ENCODE measurements at regions of chr6 and their contacts with region 1.

Region 1: DNA sequence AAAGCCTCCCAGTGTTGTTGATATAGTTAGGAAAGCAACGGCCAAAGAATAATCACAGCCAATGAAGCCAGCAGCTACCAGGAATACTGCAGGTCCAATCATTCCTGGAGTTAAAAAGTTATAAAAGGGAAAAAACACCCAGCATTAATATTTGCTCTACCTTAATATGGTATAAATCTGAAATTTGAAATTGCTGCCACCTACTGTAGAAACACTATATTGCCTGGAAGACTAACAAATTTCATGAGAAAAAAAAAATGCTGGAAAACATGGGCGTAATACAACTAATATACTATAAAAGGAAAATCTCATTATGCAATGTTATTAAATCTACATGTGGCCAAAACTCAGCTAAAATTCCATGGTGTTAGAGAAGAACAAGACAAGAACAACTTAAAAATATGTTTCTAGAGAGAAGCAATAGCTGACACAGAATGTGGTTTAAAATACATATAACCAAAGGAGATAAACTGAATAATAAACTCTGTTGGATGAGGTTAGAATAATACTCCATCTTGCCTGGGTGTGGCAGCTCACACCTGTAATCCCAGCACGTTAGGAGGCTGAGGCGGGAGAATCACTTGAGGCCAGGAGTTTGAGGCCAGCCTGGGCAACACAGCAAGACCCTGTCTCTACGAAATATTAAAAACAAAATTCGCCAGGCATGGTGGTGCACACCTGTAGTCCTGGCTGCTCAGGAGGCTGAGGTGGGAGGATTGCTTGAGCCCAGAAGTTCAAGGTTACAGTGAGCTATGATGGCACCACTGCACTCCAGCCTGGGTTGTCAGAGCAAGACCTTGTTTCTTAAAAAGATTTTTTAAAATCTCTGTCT is 43.1 kb downstream of the SLC17A5 start:
- DNase-seq: no peak
- H3K4me3 Mint-ChIP-seq: no peak overlapping the region
- H3K27ac Mint-ChIP-seq: no peak overlapping the region
- H3K4me1 Mint-ChIP-seq: peaks cover 2% of the 10 kb centered on the region
- H3K27me3 Mint-ChIP-seq: no peaks in the 10 kb centered on the region

Region 2: GRCh38 chr6:71982389-71982788 is 1628.3 kb before region 1 on chr6:
- CTCF ChIA-PET with region 1: no interaction called
- POLR2A ChIA-PET with region 1: no interaction called
- DNase-seq: no peak
- H3K4me3 Mint-ChIP-seq: no peak overlapping the region
- H3K27ac Mint-ChIP-seq: no peak overlapping the region
- H3K4me1 Mint-ChIP-seq: no peaks in the 10 kb centered on the region
- H3K27me3 Mint-ChIP-seq: no peaks in the 10 kb centered on the region

Region 3: GRCh38 chr6:73585566-73586415 is 24.9 kb before region 1 on chr6:
- CTCF ChIA-PET with region 1: interaction called, 12 read pairs
- POLR2A ChIA-PET with region 1: interaction called, 4 read pairs
- DNase-seq: peak; percentile 34
- H3K4me3 Mint-ChIP-seq: peak overlapping the region; percentile 70
- H3K27ac Mint-ChIP-seq: peak overlapping the region; percentile 93
- H3K4me1 Mint-ChIP-seq: peaks cover 27% of the 10 kb centered on the region
- H3K27me3 Mint-ChIP-seq: no peaks in the 10 kb centered on the region

Region 4: GRCh38 chr6:73679009-73679408 is 68.3 kb after region 1 on chr6:
- CTCF ChIA-PET with region 1: no interaction called
- POLR2A ChIA-PET with region 1: no interaction called
- DNase-seq: no peak
- H3K4me3 Mint-ChIP-seq: no peak overlapping the region
- H3K27ac Mint-ChIP-seq: no peak overlapping the region
- H3K4me1 Mint-ChIP-seq: peaks cover 2% of the 10 kb centered on the region
- H3K27me3 Mint-ChIP-seq: peaks cover 18% of the 10 kb centered on the region

Measured in activated CD4-positive, alpha-beta memory T cell treated with anti-CD3 and anti-CD28 coated beads, Interleukin-2, amount 10 ng/mL, durations not matched to agents 7 days and 5 days (primary cell).